Activated naive CD4-positive, alpha-beta T cell treated with anti-CD3 and anti-CD28 coated beads for 36 hours (primary cell): ENCODE measurements at regions of chr13 and their contacts with region 1.

Region 1: GRCh38 chr13:30465585-30466357 is at the start of gene HMGB1:
- DNase-seq: peak; percentile 99
- H3K4me3 Mint-ChIP-seq: peak within 1 kb of the TSS; percentile 89
- H3K27ac Mint-ChIP-seq: peak within 1 kb of the TSS; percentile 98
- H3K4me1 Mint-ChIP-seq: peaks cover 15% of the 10 kb centered on the region
- H3K27me3 Mint-ChIP-seq: peaks cover 3% of the 10 kb centered on the region
- total RNA-seq, gene HMGB1: 686 to 722 TPM

Region 2: GRCh38 chr13:29850224-29850898 is 615.4 kb before region 1 on chr13 and contains the start of gene UBL3:
- CTCF ChIA-PET with region 1: no interaction called
- intact Hi-C with region 1: loop called (anchors 1 kb)
- DNase-seq: peak; percentile 96
- H3K4me3 Mint-ChIP-seq: peak within 1 kb of the TSS; percentile 83
- H3K27ac Mint-ChIP-seq: peak within 1 kb of the TSS; percentile 97
- H3K4me1 Mint-ChIP-seq: peaks cover 28% of the 10 kb centered on the region
- H3K27me3 Mint-ChIP-seq: no peaks in the 10 kb centered on the region
- total RNA-seq, gene UBL3: 8.3 to 8.5 TPM

Region 3: GRCh38 chr13:30142486-30143211 is 323.1 kb before region 1 on chr13:
- CTCF ChIA-PET with region 1: interaction called, 5 read pairs
- intact Hi-C with region 1: loop called (anchors 5 kb)
- DNase-seq: peak; percentile 63
- H3K4me3 Mint-ChIP-seq: no peak overlapping the region
- H3K27ac Mint-ChIP-seq: peak overlapping the region; percentile 37
- H3K4me1 Mint-ChIP-seq: peaks cover 55% of the 10 kb centered on the region
- H3K27me3 Mint-ChIP-seq: no peaks in the 10 kb centered on the region

Region 4: DNA sequence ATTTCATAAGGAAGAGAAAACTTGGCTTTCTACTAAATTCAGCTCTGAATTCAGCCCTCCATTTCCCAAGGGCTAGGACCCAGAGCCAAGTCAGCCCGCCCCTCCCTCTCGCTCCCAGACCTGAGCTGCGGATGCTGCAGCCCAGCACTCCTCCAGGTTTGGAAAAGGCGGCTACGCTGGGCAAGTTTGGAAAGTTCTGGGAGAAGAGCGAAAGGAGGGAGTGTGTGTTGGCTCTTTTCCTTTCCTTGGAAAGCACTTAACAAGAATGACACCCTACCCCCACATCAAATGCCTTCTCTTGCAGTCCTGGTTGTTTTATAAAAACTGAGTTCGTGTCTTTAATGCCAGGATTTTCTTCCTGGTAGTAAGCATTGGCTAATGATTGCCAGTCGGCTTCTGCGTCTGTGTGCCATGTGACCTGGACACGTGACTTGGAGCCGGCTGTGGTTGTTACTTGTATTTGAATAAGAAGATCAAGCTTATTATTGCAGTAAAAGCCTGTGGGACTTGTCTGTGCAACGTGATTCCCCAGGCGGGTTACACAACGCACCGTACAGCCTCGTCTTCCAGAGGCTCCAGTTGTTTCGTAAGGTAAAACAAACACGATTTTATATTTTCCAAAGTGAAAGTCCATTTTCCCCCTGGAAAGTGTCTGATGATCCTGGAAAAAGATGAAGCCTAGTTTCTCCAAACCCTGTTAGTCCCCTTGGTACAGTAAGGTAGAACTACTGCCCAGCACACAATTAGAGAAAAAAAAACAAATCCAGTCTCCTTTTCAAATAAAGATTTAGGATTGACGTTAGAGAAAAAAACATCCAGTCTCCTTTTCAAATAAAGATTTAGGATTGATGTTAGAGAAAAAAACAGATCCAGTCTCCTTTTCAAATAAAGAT is 70.3 kb before region 1 on chr13:
- CTCF ChIA-PET with region 1: interaction called, 3 read pairs
- intact Hi-C with region 1: loop called (anchors 1 kb)
- DNase-seq: peak; percentile 88
- H3K4me3 Mint-ChIP-seq: peak overlapping the region; percentile 85
- H3K27ac Mint-ChIP-seq: peak overlapping the region; percentile 94
- H3K4me1 Mint-ChIP-seq: peaks cover 23% of the 10 kb centered on the region
- H3K27me3 Mint-ChIP-seq: no peaks in the 10 kb centered on the region

Region 5: GRCh38 chr13:30429721-30430694 is 35.8 kb before region 1 on chr13:
- CTCF ChIA-PET with region 1: interaction called, 5 read pairs
- intact Hi-C with region 1: loop called (anchors 1 kb)
- DNase-seq: peak; percentile 53
- H3K4me3 Mint-ChIP-seq: peak overlapping the region; percentile 47
- H3K27ac Mint-ChIP-seq: peak overlapping the region; percentile 82
- H3K4me1 Mint-ChIP-seq: peaks cover 29% of the 10 kb centered on the region
- H3K27me3 Mint-ChIP-seq: no peaks in the 10 kb centered on the region

Region 6: DNA sequence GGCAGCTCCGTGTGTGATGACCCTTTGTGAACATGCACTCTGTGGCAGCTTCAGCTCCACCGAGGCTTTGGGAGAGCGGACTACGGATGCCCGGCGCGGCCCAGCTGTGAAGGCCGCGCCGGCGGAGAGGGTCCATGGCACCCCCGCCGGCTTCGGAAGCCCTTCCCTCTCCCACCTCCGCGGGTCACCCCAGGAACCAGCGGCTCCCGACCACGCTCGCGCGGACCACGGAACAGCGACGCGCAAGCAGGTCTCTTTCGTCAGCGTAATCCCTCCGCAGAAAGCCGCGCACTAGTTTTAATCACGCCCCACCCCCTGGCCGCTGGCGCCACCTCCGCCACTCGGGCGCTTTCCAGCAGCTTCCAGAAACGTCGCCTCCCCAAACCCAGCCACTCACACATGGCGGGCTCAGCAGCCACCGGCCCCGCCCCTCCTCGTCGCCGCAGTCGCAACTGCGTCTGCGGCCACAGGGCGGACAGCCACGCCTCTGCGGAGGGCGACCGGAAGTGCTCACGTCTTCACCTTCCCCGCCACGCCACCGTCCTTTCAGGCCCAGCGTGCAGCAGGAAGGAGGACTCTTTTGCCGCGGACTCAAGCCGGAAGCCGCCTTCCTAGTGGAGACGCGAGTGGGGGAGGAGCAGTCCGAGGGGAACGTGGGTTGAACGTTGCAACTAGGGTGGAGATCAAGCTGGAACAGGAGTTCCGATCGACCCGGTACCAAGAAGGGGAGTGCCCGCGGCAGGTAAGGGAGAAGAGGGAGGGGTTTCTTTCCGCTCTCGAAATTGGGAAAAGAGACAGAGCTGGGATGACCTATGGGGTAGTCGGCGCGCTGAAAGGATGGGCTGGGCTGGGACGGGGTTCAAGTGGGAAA is 151.8 kb after region 1 on chr13 and contains the start of gene USPL1:
- CTCF ChIA-PET with region 1: interaction called, 5 read pairs
- intact Hi-C with region 1: loop called (anchors 1 kb)
- DNase-seq: peak; percentile 98
- H3K4me3 Mint-ChIP-seq: no peak within 1 kb of the TSS
- H3K27ac Mint-ChIP-seq: no peak within 1 kb of the TSS
- H3K4me1 Mint-ChIP-seq: peaks cover 29% of the 10 kb centered on the region
- H3K27me3 Mint-ChIP-seq: no peaks in the 10 kb centered on the region
- total RNA-seq, gene USPL1: 10.7 to 11.3 TPM

Region 7: GRCh38 chr13:31161828-31162590 is 696.2 kb after region 1 on chr13 and contains the start of gene HSPH1:
- CTCF ChIA-PET with region 1: no interaction called
- intact Hi-C with region 1: loop called (anchors 1 kb)
- DNase-seq: peak; percentile 99
- H3K4me3 Mint-ChIP-seq: peak within 1 kb of the TSS; percentile 96
- H3K27ac Mint-ChIP-seq: peak within 1 kb of the TSS; percentile 98
- H3K4me1 Mint-ChIP-seq: peaks cover 27% of the 10 kb centered on the region
- H3K27me3 Mint-ChIP-seq: no peaks in the 10 kb centered on the region
- total RNA-seq, gene HSPH1: 122 to 150 TPM